Spleen (tissue), 13 donors: ENCODE measurements at regions of chr7 and their contacts with region 1.

Region 1: GRCh38 chr7:30974605-30975255 is 11.0 kb downstream of the GHRHR start:
- DNase-seq: no peak
- H3K4me3 ChIP-seq: no peak overlapping the region
- H3K27ac ChIP-seq: no peak overlapping the region
- H3K4me1 ChIP-seq: no peaks in the 10 kb centered on the region
- H3K27me3 ChIP-seq: peaks cover 0 to 78% (median 1%) of the 10 kb centered on the region in 7 donors
- CTCF ChIP-seq: peak in 8 of 11 experiments; percentile 23 to 56 (median 46)
- POLR2A ChIP-seq: no peak

Region 2: GRCh38 chr7:30800785-30801252 is 173.9 kb before region 1 on chr7:
- intact Hi-C with region 1: loop called (anchors 10 kb)
- DNase-seq: no peak
- H3K4me3 ChIP-seq: no peak overlapping the region
- H3K27ac ChIP-seq: no peak overlapping the region
- H3K4me1 ChIP-seq: peaks cover 0 to 22% (median 3%) of the 10 kb centered on the region in 6 donors
- H3K27me3 ChIP-seq: no peaks in the 10 kb centered on the region
- CTCF ChIP-seq: peak; percentile 36 to 74 (median 56)
- POLR2A ChIP-seq: no peak

Region 3: DNA sequence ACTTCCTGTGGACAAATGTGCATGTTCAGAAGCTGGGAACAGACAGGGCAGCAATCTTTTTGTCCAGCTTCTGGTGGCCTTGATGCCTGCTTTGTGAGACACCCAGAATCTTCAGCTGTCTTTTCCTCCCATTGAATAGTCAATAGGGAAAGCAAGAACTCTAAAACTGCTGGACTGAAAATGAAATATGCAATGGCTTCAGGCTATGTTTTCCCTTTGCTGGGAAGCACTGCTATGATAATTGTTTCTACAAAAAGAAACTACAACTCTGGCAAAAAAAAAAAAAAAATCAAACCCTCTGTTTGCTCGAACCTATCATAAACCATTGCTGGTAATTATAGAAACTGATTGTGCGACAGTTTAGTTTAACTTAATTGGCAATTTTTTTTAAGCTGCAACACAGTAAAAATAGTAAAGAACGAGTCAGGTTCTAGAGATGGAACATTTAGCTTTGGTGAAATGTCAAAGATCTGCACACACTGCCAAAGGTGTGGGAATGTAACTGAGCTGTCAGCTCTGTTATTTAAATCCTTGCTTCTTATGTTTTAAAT is 444.9 kb after region 1 on chr7:
- intact Hi-C with region 1: no loop called
- DNase-seq: no peak
- H3K4me3 ChIP-seq: no peak overlapping the region
- H3K27ac ChIP-seq: no peak overlapping the region
- H3K4me1 ChIP-seq: no peaks in the 10 kb centered on the region
- H3K27me3 ChIP-seq: no peaks in the 10 kb centered on the region
- CTCF ChIP-seq: no peak
- POLR2A ChIP-seq: no peak